ENCODE measurements at regions of chr2 and their contacts with region 1.

Region 1: DNA sequence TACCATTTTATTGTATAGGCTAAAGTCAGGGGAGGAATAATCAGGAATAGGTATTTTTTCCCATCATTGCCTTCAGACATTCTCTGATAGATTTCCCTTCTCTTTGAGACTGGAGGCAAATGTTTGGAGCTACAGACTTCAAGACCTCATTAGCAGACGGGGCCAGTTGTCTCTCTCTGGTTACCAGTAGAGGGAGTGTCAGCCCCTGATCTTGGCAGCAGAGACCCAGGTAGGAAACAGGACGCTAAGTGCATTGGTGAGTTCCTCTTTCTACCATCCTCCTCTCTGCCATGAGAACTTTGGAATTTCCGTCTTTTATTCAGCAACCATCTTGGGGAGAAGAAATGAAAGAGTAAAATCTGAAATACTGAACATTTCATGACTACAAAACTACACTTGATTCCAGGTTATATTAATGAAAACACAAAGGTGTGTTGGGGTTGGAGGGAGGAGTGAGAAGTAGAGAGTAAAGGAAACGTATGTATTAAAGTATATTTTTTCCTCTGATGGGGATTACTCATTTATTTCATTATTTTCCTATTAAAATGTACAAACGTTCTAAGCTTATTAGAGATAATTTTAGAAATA is 186.2 kb upstream of the GCFC2 start:
- DNase-seq: peak; percentile 30
- H3K4me3 ChIP-seq: no peak overlapping the region
- H3K27ac ChIP-seq: no peak overlapping the region
- H3K4me1 ChIP-seq: no peaks in the 10 kb centered on the region
- H3K27me3 ChIP-seq: no peaks in the 10 kb centered on the region
- CTCF ChIP-seq: peak; percentile 56 to 77

Region 2: GRCh38 chr2:75646583-75647425 is 250.1 kb before region 1 on chr2 and contains the start of gene MRPL19:
- CTCF ChIA-PET with region 1: no interaction called
- dilution Hi-C with region 1: no loop called
- in situ Hi-C with region 1: no loop called
- intact Hi-C with region 1: loop called (anchors 10 kb)
- DNase-seq: peak; percentile 89
- H3K4me3 ChIP-seq: peak within 1 kb of the TSS; percentile 78 to 84 (median 80)
- H3K27ac ChIP-seq: peak within 1 kb of the TSS; percentile 65
- H3K4me1 ChIP-seq: peaks cover 10% of the 10 kb centered on the region
- H3K27me3 ChIP-seq: no peaks in the 10 kb centered on the region
- CTCF ChIP-seq: no peak
- total RNA-seq, gene MRPL19: 30.3 to 59.4 TPM

Region 3: GRCh38 chr2:75680402-75680801 is 216.5 kb before region 1 on chr2:
- CTCF ChIA-PET with region 1: no interaction called
- dilution Hi-C with region 1: no loop called
- in situ Hi-C with region 1: no loop called
- intact Hi-C with region 1: no loop called
- DNase-seq: no peak
- H3K4me3 ChIP-seq: no peak overlapping the region
- H3K27ac ChIP-seq: no peak overlapping the region
- H3K4me1 ChIP-seq: no peaks in the 10 kb centered on the region
- H3K27me3 ChIP-seq: no peaks in the 10 kb centered on the region
- CTCF ChIP-seq: no peak

Measured in mammary epithelial cell (primary cell).